Activated CD4-positive, alpha-beta T cell treated with anti-CD3 and anti-CD28 coated beads for 36 hours (primary cell): ENCODE measurements at regions of chr19 and their contacts with region 1.

Region 1: DNA sequence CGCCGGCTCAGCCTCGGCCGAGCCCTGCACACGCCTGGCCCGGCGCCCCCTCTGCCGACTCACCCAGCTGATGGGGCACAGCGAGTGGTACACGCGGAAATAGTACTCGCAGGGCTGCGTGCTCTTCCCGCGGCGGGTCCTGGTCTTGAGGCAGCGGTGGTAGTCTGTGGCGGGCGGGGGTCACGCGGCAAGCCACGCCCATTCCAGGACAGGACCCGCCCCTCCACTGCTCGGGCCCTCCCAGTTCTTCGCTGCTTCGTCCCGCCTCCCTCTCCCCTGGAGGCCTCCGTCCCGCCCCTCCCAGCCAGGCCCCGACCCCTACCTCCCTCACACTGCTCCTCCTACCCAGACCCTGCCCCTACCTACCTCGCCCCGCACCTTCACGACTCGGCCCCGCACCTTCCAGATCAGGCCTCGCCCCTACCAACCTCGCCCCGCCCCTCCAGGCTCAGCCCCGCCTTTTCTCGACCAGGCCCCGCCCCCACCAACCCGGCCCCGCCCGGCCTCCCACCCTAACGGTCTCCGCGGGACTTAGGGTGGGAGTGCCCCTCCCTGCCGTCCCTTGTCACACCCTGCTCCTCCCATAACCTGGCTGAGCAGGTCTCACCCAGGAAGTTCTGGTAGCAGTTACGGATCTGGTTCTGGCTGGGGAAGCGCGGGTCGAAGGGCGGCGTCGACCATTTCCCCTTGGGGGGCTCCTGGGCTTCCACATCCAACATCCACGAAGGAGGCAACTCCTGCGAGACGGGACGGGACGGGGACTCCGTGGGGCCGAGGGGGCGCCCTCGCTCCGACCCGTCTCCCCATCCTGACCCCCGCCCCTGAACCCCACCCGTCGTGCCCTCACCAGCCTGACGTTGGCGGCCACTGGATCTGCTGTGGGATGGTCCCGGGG is 469 bp downstream of the COX6B2 start:
- DNase-seq: peak; percentile 71
- ATAC-seq: peak; percentile 85
- H3K4me3 Mint-ChIP-seq: peak overlapping the region; percentile 63
- H3K27ac Mint-ChIP-seq: no peak overlapping the region
- H3K4me1 Mint-ChIP-seq: peaks cover 13% of the 10 kb centered on the region
- H3K27me3 Mint-ChIP-seq: peaks cover 42% of the 10 kb centered on the region

Region 2: DNA sequence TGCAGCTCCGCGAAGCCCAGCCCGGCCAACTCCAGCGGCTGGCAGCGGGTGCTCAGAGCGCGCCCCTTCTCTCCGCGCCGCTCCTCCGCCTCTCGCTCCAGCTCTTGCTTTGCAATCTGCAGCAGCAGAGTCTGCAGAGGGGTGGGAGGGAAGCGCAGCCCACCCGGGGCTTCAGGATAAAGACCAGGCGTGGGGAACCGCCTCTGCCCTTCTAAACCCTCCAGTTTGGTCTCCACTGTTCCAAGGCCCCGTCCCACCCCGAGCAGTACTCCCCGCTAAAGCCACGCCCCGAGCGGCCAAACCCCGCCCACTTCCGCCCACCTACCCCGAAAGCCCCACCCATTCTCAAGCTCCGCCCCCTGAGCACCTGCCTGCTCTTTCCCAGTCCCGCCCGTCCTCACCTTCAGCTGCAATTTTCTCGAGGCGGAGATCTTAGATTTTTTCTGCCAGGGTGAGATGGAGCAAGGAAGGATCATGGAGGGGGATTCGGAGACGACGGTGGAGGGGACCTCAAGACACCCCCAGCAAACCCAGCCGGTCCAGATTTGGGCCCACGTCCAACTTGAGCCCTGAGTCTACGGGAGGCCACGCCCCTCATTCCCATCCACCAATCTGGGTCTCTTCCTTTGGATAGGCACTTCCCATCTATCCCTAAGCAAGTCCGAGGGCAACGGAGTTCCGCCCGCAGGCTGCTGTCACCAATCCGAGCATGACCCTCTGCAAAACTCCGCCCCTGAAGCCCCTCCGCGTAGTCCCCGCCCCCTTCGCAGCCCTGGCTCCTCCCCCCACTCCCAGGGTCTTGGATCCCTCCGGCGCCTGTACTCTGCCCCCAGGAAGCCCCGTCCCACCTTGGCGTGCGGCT is 197.6 kb before region 1 on chr19:
- CTCF ChIA-PET with region 1: no interaction called
- POLR2A ChIA-PET with region 1: no interaction called
- intact Hi-C with region 1: no loop called
- DNase-seq: peak; percentile 68
- ATAC-seq: peak; percentile 35
- H3K4me3 Mint-ChIP-seq: no peak overlapping the region
- H3K27ac Mint-ChIP-seq: no peak overlapping the region
- H3K4me1 Mint-ChIP-seq: peaks cover 25% of the 10 kb centered on the region
- H3K27me3 Mint-ChIP-seq: peaks cover 17% of the 10 kb centered on the region

Region 3: GRCh38 chr19:55241143-55242088 is 112.6 kb before region 1 on chr19:
- CTCF ChIA-PET with region 1: no interaction called
- POLR2A ChIA-PET with region 1: no interaction called
- intact Hi-C with region 1: no loop called
- DNase-seq: no peak
- ATAC-seq: no peak
- H3K4me3 Mint-ChIP-seq: no peak overlapping the region
- H3K27ac Mint-ChIP-seq: no peak overlapping the region
- H3K4me1 Mint-ChIP-seq: peaks cover 2% of the 10 kb centered on the region
- H3K27me3 Mint-ChIP-seq: no peaks in the 10 kb centered on the region

Region 4: DNA sequence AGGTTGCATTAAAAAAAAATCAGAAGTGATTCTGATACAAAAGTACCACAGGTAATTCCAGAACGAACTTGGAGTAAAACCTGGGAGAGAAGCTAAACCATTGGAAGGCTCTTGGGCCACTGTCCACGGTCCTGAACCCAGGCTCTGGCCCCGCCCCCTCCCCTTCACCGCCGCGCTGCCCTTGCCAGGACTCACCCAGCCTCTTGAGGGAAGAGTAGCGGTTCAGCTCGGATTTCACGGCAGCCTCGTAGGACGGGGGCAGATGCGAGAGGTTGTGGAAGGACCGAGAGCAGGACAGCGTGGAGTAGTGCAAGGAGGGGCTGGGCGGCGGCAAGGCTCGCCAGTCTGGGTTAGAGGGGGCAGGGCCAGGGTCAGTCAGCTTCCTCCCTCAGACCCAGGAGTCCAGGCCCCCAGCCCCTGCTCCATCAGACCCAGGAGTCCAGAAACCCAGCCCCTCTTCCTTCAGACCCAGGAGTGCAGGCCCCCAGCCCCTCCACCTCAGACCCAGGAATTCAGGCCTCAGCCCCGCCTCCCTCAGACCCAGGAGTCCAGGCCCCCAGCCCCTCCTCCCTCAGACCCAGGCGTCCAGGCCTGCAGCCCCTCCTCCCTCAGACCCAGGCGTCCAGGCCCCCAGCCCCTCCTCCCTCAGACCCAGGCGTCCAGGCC is 83.5 kb after region 1 on chr19:
- CTCF ChIA-PET with region 1: no interaction called
- POLR2A ChIA-PET with region 1: no interaction called
- intact Hi-C with region 1: loop called in 1 of 2 experiments (anchors 5 kb)
- DNase-seq: peak; percentile 58
- ATAC-seq: no peak
- H3K4me3 Mint-ChIP-seq: no peak overlapping the region
- H3K27ac Mint-ChIP-seq: no peak overlapping the region
- H3K4me1 Mint-ChIP-seq: peaks cover 13% of the 10 kb centered on the region
- H3K27me3 Mint-ChIP-seq: peaks cover 42% of the 10 kb centered on the region